Activated naive CD4-positive, alpha-beta T cell treated with anti-CD3 and anti-CD28 coated beads for 36 hours (primary cell): ENCODE measurements at regions of chr4 and their contacts with region 1.

Region 1: GRCh38 chr4:124111922-124112321 is 600.6 kb downstream of the ANKRD50 start:
- DNase-seq: no peak
- H3K4me3 Mint-ChIP-seq: no peak overlapping the region
- H3K27ac Mint-ChIP-seq: no peak overlapping the region
- H3K4me1 Mint-ChIP-seq: no peaks in the 10 kb centered on the region
- H3K27me3 Mint-ChIP-seq: no peaks in the 10 kb centered on the region

Region 2: DNA sequence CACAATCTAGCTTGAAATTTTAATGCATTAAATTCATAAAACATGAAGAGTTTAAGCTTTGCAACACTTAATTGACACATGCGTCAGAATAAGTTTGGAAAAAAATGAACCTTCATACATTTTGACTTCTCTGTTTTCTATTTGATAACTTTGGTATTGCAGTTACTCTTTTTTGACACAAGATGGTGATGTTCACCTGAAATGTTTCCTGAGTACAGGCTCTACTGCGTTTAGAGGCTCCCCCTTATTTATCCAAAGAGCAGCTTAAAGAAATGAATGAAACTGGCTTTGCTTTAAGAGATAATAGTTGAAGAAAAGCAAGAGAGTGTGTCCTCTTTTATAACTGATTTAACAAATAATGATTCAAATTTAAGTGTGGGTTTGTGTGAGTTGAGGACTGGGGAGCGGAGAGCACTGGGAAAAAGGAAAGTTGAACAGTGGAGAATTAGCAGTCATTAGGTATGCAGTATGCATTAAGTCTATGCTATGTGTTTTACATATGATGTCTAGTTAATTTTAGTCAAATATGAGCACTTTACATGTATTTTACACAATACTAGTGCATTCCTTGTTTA is 1008.9 kb before region 1 on chr4:
- CTCF ChIA-PET with region 1: no interaction called
- intact Hi-C with region 1: loop called (anchors 5 kb)
- DNase-seq: no peak
- H3K4me3 Mint-ChIP-seq: no peak overlapping the region
- H3K27ac Mint-ChIP-seq: no peak overlapping the region
- H3K4me1 Mint-ChIP-seq: no peaks in the 10 kb centered on the region
- H3K27me3 Mint-ChIP-seq: no peaks in the 10 kb centered on the region